ENCODE measurements at regions of chr3 and their contacts with region 1.

Region 1: GRCh38 chr3:96039632-96040031 is 774.8 kb upstream of the EPHA6 start:
- DNase-seq: no peak
- ATAC-seq: no peak
- H3K4me3 ChIP-seq: no peak overlapping the region
- H3K27ac ChIP-seq: no peak overlapping the region
- H3K4me1 ChIP-seq: no peaks in the 10 kb centered on the region
- H3K27me3 ChIP-seq: no peaks in the 10 kb centered on the region
- CTCF ChIP-seq: no peak

Region 2: GRCh38 chr3:94909726-94910125 is 1129.9 kb before region 1 on chr3:
- CTCF ChIA-PET with region 1: no interaction called
- POLR2A ChIA-PET with region 1: no interaction called
- intact Hi-C with region 1: loop called (anchors 5 kb)
- DNase-seq: no peak
- ATAC-seq: no peak
- H3K4me3 ChIP-seq: no peak overlapping the region
- H3K27ac ChIP-seq: no peak overlapping the region
- H3K4me1 ChIP-seq: no peaks in the 10 kb centered on the region
- H3K27me3 ChIP-seq: no peaks in the 10 kb centered on the region
- CTCF ChIP-seq: no peak

Region 3: GRCh38 chr3:96022676-96023075 is 17.0 kb before region 1 on chr3:
- CTCF ChIA-PET with region 1: no interaction called
- POLR2A ChIA-PET with region 1: no interaction called
- intact Hi-C with region 1: no loop called
- DNase-seq: peak; percentile 6
- ATAC-seq: 0 out of 2 replicates have a peak, but pooled peaks have one; percentile 24
- H3K4me3 ChIP-seq: no peak overlapping the region
- H3K27ac ChIP-seq: no peak overlapping the region
- H3K4me1 ChIP-seq: no peaks in the 10 kb centered on the region
- H3K27me3 ChIP-seq: no peaks in the 10 kb centered on the region
- CTCF ChIP-seq: peak; percentile 42